ENCODE measurements at regions of chr2 and their contacts with region 1.

Region 1: DNA sequence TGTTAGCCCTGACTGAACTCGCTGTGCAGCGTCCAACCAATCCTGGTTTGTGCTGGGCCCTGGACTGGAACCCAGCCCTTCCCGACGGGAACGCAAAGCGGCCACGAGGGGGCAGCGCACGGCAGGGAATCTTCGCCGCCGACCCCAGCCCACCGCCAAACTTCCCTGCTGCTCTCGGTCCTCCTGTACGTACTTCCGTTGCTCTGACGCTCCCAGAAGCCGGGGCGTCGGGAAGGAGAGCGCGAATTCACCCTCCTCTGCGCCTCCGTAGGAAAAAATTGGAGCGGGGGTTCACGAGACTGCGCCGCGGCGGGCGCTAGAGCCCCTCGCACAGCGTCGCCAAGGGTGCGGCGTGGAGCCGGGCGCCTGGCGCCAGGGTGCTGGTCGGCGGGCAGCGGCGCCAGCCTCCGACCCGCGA is 948 bp upstream of the SH3RF3 start:
- DNase-seq: peak; percentile 47
- ATAC-seq: peak; percentile 91
- H3K4me3 ChIP-seq: peak overlapping the region; percentile 49 to 72 (median 54)
- H3K27ac ChIP-seq: no peak overlapping the region
- H3K4me1 ChIP-seq: peaks cover 13% of the 10 kb centered on the region
- H3K27me3 ChIP-seq: peaks cover 2 to 51% of the 10 kb centered on the region in 2 experiments; a peak in 4 of 5 replicates
- CTCF ChIP-seq: peak; percentile 99
- EP300 ChIP-seq: no peak
- POLR2A ChIP-seq: no peak
- RAD21 ChIP-seq: peak; percentile 96

Region 2: DNA sequence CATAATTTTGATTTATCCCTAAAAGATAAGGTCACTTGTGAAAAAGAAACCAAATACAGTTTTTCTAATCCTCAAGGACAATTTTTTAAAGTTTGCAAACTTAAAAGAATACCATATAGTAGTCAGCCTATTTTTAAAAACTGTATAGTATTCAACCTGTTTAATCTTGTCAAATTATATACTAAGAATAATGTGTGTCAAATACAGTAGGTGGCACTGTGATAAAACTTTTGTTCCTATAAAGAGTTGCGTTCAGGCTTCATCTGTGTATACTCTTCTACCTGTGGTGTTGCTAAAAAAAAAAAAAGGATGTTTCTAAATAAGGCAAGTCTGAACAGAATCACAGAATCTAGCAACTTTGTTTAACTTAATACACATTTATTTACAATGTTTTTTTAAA is 272.9 kb before region 1 on chr2:
- CTCF ChIA-PET with region 1: no interaction called
- POLR2A ChIA-PET with region 1: no interaction called
- in situ Hi-C with region 1: no loop called
- intact Hi-C with region 1: no loop called
- DNase-seq: peak; percentile 23
- ATAC-seq: peak; percentile 47; the same call in 1 of the 3 replicates
- H3K4me3 ChIP-seq: no peak overlapping the region
- H3K27ac ChIP-seq: no peak overlapping the region
- H3K4me1 ChIP-seq: no peaks in the 10 kb centered on the region
- H3K27me3 ChIP-seq: no peaks in the 10 kb centered on the region
- CTCF ChIP-seq: peak; percentile 32
- EP300 ChIP-seq: no peak
- POLR2A ChIP-seq: no peak
- RAD21 ChIP-seq: no peak

Region 3: DNA sequence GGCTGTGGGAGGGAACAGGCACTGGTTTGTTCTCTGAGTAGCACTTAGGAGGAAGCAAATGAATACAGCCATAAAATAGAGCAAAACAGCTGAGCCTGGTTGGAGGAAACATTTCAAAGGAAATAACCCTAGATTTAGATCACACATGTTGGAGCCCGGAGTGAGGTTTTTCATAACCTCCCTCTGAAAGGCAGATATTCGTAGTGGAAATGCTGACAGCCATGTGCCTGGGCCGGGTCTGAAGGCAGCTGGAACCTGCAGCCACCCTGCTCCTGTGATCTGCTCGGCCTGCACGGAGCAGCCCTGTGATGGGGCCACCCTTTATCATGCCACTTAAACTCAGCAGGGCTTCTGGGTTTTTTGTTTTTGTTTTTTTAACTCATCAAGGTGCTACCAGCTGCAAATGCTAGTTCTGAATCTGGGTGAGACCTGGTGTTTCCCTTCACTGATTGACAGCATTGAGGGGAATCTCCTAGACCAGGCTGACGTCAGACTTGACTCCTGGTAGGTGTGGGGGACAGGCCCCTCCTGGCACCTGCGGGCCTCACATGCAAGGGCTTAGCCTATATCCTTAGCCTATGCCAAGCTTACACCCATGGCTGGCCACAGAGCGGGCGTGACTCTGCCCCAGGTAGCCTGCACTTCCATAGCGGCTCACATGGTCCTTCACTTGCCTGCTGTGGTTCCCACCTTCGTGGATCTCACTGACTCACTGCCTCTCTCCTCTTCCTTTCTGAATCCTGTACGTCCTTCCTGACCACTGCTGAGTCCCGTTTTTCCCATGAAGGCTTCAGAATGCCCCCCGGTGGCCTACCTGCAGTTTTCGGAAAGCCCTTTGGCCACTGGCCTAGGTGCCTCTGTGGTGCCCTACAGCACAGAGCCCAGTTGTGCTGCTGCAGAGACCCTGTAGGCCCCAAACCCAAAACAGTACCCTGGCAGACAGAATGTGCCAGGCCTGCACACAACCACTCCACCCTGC is 268.4 kb after region 1 on chr2:
- CTCF ChIA-PET with region 1: no interaction called
- POLR2A ChIA-PET with region 1: no interaction called
- in situ Hi-C with region 1: no loop called
- intact Hi-C with region 1: loop called (anchors 1 kb)
- DNase-seq: no peak
- ATAC-seq: peak; percentile 22; the same call in 1 of the 3 replicates
- H3K4me3 ChIP-seq: no peak overlapping the region
- H3K27ac ChIP-seq: no peak overlapping the region
- H3K4me1 ChIP-seq: no peaks in the 10 kb centered on the region
- H3K27me3 ChIP-seq: peaks cover 0 to 3% of the 10 kb centered on the region in 2 experiments; a peak in 1 of 5 replicates
- CTCF ChIP-seq: 0 out of 2 replicates have a peak, but pooled peaks have one; percentile 14
- EP300 ChIP-seq: no peak
- POLR2A ChIP-seq: no peak
- RAD21 ChIP-seq: no peak

Region 4: DNA sequence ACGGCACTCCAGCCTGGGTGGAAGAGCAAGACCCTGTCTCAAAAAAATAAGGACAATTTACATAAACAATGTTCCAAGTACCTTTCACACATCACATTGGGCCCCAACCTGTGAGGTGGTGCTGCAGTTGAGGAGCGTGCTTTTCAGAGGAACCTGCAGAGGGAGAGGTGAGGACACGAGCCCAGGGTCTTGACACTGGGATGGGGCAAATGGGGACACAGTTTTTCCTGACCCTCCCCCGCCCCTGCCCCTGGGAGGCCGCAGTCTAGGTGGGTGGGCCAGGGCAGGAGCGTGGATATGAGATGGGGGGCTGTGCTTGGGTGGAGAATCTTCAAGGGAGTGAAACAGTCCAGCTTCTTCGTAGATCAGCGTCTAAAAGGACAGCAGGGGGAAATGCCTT is 372.9 kb after region 1 on chr2:
- CTCF ChIA-PET with region 1: no interaction called
- POLR2A ChIA-PET with region 1: no interaction called
- in situ Hi-C with region 1: loop called (anchors 5 kb)
- intact Hi-C with region 1: loop called (anchors 1 kb)
- DNase-seq: no peak
- ATAC-seq: no peak
- H3K4me3 ChIP-seq: no peak overlapping the region
- H3K27ac ChIP-seq: no peak overlapping the region
- H3K4me1 ChIP-seq: no peaks in the 10 kb centered on the region
- H3K27me3 ChIP-seq: peaks cover 3 to 13% of the 10 kb centered on the region in 2 experiments; a peak in 2 of 5 replicates
- CTCF ChIP-seq: no peak
- EP300 ChIP-seq: no peak
- POLR2A ChIP-seq: no peak
- RAD21 ChIP-seq: no peak

Region 5: GRCh38 chr2:109510136-109511028 is 382.3 kb after region 1 on chr2:
- CTCF ChIA-PET with region 1: interaction called, 38 read pairs
- POLR2A ChIA-PET with region 1: no interaction called
- in situ Hi-C with region 1: no loop called
- intact Hi-C with region 1: loop called (anchors 1 kb)
- DNase-seq: peak; percentile 75
- ATAC-seq: peak; percentile 81
- H3K4me3 ChIP-seq: no peak overlapping the region
- H3K27ac ChIP-seq: no peak overlapping the region
- H3K4me1 ChIP-seq: peaks cover 5% of the 10 kb centered on the region; the same call in 1 of the 2 replicates
- H3K27me3 ChIP-seq: peaks cover 1 to 29% of the 10 kb centered on the region in 2 experiments; a peak in 3 of 5 replicates
- CTCF ChIP-seq: peak; percentile 97
- EP300 ChIP-seq: no peak
- POLR2A ChIP-seq: no peak
- RAD21 ChIP-seq: peak; percentile 86

Measured in HepG2 (cell line).